ENCODE measurements at regions of chr3 and their contacts with region 1.

Region 1: GRCh38 chr3:193863657-193864357 is 270.8 kb downstream of the OPA1 start:
- DNase-seq: peak; percentile 40 to 45
- ATAC-seq: peak; percentile 46 to 94 (median 76)
- H3K4me3 ChIP-seq: no peak overlapping the region
- H3K27ac ChIP-seq: peak overlapping the region in 8 of 10 donors; percentile 32 to 67 (median 43)
- H3K4me1 ChIP-seq: peaks cover 0 to 41% (median 34%) of the 10 kb centered on the region in 9 donors
- H3K27me3 ChIP-seq: peaks cover 0 to 3% (median under 1%) of the 10 kb centered on the region in 7 donors
- CTCF ChIP-seq: no peak

Region 2: GRCh38 chr3:193805509-193805908 is 58.3 kb before region 1 on chr3:
- intact Hi-C with region 1: loop called in 2 of 10 experiments (anchors 5 kb)
- DNase-seq: peak; percentile 85 to 89
- ATAC-seq: peak; percentile 81 to 92 (median 87)
- H3K4me3 ChIP-seq: no peak overlapping the region
- H3K27ac ChIP-seq: peak overlapping the region in 1 of 10 donors; percentile 16
- H3K4me1 ChIP-seq: peaks cover 0 to 16% (median 9%) of the 10 kb centered on the region in 9 donors
- H3K27me3 ChIP-seq: peaks cover 0 to 20% (median 0%) of the 10 kb centered on the region in 7 donors
- CTCF ChIP-seq: no peak